Activated CD8-positive, alpha-beta T cell treated with anti-CD3 and anti-CD28 coated beads, Interleukin-2, amount 10 ng/mL, durations not matched to agents 7 days and 5 days (primary cell): ENCODE measurements at regions of chr3 and their contacts with region 1.

Region 1: GRCh38 chr3:194315088-194315964 is 35.8 kb downstream of the CPN2 start:
- DNase-seq: peak; percentile 84
- ATAC-seq: peak; percentile 94
- H3K4me3 Mint-ChIP-seq: peak overlapping the region; percentile 60
- H3K27ac Mint-ChIP-seq: peak overlapping the region; percentile 54
- H3K4me1 Mint-ChIP-seq: peaks cover 30% of the 10 kb centered on the region
- H3K27me3 Mint-ChIP-seq: peaks cover 65% of the 10 kb centered on the region

Region 2: GRCh38 chr3:193665370-193665989 is 649.8 kb before region 1 on chr3:
- CTCF ChIA-PET with region 1: interaction called, 59 read pairs
- POLR2A ChIA-PET with region 1: no interaction called
- DNase-seq: no peak
- ATAC-seq: no peak
- H3K4me3 Mint-ChIP-seq: no peak overlapping the region
- H3K27ac Mint-ChIP-seq: no peak overlapping the region
- H3K4me1 Mint-ChIP-seq: no peaks in the 10 kb centered on the region
- H3K27me3 Mint-ChIP-seq: no peaks in the 10 kb centered on the region

Region 3: GRCh38 chr3:193780810-193781472 is 534.4 kb before region 1 on chr3:
- CTCF ChIA-PET with region 1: interaction called, 60 read pairs
- POLR2A ChIA-PET with region 1: no interaction called
- DNase-seq: peak; percentile 26
- ATAC-seq: no peak
- H3K4me3 Mint-ChIP-seq: no peak overlapping the region
- H3K27ac Mint-ChIP-seq: no peak overlapping the region
- H3K4me1 Mint-ChIP-seq: peaks cover 8% of the 10 kb centered on the region
- H3K27me3 Mint-ChIP-seq: peaks cover 32% of the 10 kb centered on the region

Region 4: DNA sequence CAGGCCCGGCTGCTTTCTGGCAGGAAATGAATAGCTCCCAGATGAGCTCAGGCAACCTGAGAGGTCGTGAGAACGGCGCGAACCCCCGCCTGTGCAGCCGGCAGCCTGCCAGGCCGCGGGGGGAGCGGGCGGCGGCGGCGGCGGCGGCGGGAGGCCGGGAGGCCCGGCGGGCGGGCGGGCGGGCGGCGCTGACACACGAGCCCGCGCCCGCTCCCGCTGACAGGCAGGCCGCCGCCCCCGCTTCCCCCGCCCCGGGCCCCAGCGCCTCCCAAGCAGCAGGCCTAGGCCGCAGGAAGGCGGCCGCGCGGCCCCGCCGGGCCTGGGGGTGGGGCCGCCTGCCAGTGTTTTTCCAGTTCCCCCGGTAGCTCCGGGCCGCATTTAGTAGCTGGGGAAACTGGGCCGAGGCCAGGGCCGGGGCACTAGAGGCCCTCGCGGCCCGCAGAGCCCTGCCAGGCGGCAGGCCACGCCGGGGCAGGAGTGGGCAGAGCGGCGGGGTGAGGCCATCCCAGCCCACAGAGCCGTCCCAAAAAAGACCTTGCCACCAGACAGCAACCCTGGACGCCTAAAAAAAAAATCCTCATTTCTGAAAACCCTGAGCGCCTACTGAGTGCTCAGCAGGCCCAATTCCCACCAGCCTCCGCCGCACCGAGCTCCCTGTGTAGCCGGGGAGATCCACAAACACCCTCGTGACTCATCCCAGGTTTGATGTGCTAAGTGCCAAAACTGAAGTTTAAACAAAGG is 173.7 kb before region 1 on chr3:
- CTCF ChIA-PET with region 1: interaction called, 11 read pairs
- POLR2A ChIA-PET with region 1: no interaction called
- DNase-seq: peak; percentile 72
- ATAC-seq: peak; percentile 59
- H3K4me3 Mint-ChIP-seq: peak overlapping the region; percentile 54
- H3K27ac Mint-ChIP-seq: peak overlapping the region; percentile 39
- H3K4me1 Mint-ChIP-seq: peaks cover 39% of the 10 kb centered on the region
- H3K27me3 Mint-ChIP-seq: peaks cover 62% of the 10 kb centered on the region